WTC11 (cell line): ENCODE measurements at regions of chr13 and their contacts with region 1.

Region 1: GRCh38 chr13:50801087-50801931 is 42.2 kb downstream of the DLEU7 start:
- DNase-seq: peak; percentile 65
- ATAC-seq: peak; percentile 98
- H3K4me3 Mint-ChIP-seq: peak overlapping the region; percentile 58
- H3K27ac Mint-ChIP-seq: no peak overlapping the region
- H3K4me1 Mint-ChIP-seq: peaks cover 14% of the 10 kb centered on the region
- H3K27me3 Mint-ChIP-seq: no peaks in the 10 kb centered on the region
- CTCF ChIP-seq: peak; percentile 47

Region 2: GRCh38 chr13:49976314-49977258 is 824.7 kb before region 1 on chr13:
- CTCF ChIA-PET with region 1: interaction called, 17 read pairs
- POLR2A ChIA-PET with region 1: no interaction called
- DNase-seq: peak; percentile 76
- ATAC-seq: peak; percentile 89
- H3K4me3 Mint-ChIP-seq: no peak overlapping the region
- H3K27ac Mint-ChIP-seq: no peak overlapping the region
- H3K4me1 Mint-ChIP-seq: 0 out of 2 replicates have a peak, but pooled peaks cover 5% of the 10 kb centered on the region
- H3K27me3 Mint-ChIP-seq: no peaks in the 10 kb centered on the region; the same call in 1 of the 2 replicates
- CTCF ChIP-seq: peak; percentile 95

Region 3: GRCh38 chr13:50747737-50748350 is 53.5 kb before region 1 on chr13:
- CTCF ChIA-PET with region 1: no interaction called
- POLR2A ChIA-PET with region 1: no interaction called
- DNase-seq: no peak
- ATAC-seq: no peak
- H3K4me3 Mint-ChIP-seq: no peak overlapping the region
- H3K27ac Mint-ChIP-seq: no peak overlapping the region
- H3K4me1 Mint-ChIP-seq: no peaks in the 10 kb centered on the region
- H3K27me3 Mint-ChIP-seq: no peaks in the 10 kb centered on the region
- CTCF ChIP-seq: no peak

Region 4: GRCh38 chr13:50766013-50766412 is 35.3 kb before region 1 on chr13:
- CTCF ChIA-PET with region 1: no interaction called
- POLR2A ChIA-PET with region 1: no interaction called
- DNase-seq: no peak
- ATAC-seq: no peak
- H3K4me3 Mint-ChIP-seq: no peak overlapping the region
- H3K27ac Mint-ChIP-seq: no peak overlapping the region
- H3K4me1 Mint-ChIP-seq: no peaks in the 10 kb centered on the region
- H3K27me3 Mint-ChIP-seq: peaks cover 2% of the 10 kb centered on the region
- CTCF ChIP-seq: no peak

Region 5: DNA sequence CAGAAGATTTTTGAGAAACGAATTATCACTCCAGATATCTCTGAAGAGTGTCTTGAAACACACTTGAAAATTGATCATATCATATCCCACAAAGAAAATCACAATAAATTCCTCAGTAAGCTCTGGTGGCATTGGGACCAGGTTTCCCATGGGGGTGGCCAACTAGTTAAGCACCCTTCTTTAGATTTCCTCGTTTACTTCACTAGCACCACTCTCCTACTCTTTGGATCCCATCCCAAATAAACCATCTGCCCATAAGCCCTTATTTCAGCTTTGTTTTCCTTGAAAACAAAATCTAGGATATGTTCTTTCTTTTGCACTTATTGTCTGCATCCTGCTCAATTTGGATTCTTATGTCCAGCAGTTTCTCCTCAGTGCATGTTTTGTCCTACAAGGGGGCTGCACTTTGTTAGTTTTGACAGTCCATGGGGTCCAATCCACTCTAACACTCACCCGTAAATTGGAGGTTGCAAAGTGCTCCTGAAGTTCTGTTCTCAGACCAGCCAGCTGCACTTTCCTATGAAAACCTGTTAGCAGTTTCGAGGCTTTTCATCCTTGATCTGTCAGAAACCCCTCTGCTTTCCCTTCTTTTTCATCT is 380.6 kb after region 1 on chr13:
- CTCF ChIA-PET with region 1: no interaction called
- POLR2A ChIA-PET with region 1: no interaction called
- DNase-seq: no peak
- ATAC-seq: 0 out of 2 replicates have a peak, but pooled peaks have one; percentile 11
- H3K4me3 Mint-ChIP-seq: no peak overlapping the region
- H3K27ac Mint-ChIP-seq: peak overlapping the region; percentile 20
- H3K4me1 Mint-ChIP-seq: peaks cover 48% of the 10 kb centered on the region
- H3K27me3 Mint-ChIP-seq: no peaks in the 10 kb centered on the region
- CTCF ChIP-seq: no peak